ENCODE measurements at regions of chr7 and their contacts with region 1.

Region 1: DNA sequence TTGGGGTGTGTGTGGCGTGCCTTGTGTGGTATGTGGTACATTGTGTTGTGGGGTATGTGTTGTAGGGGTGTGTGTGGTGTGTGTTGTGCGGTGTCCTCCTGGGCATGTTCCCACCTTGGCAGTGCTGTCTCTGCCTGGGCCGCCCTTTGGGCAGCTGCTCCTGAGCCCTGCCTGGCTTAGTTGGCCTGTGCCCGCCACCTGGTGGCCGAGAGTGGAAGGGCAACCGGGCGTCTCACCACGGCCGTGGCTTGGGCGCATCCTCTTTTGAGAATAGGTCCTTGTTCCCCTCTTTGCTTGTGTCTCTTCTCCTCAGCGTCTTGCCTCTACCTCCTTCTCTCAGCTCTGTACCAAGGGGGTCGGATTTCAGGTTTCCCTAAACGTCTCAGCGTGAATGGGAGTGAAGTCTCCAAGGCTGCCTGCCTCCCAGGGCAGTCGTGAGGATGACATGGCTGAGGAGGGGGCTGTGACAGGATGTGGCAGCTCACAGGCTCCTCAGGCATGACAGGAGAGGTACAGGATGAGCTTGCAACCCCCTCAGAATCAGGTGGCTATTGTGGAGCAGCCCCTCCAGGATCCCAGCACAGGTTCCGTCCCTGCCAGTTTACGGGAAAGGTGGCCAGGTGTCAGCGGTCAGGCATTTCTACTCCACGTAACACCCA is 98.4 kb upstream of the PODXL start:
- DNase-seq: peak; percentile 45 to 83 (median 68)
- ATAC-seq: peak; percentile 86
- H3K4me3 ChIP-seq: no peak overlapping the region
- H3K4me3 Mint-ChIP-seq: no peak overlapping the region
- H3K27ac ChIP-seq: no peak overlapping the region
- H3K27ac Mint-ChIP-seq: no peak overlapping the region
- H3K4me1 ChIP-seq: no peaks in the 10 kb centered on the region
- H3K4me1 Mint-ChIP-seq: peaks cover 0 to 5% (median 0%) of the 10 kb centered on the region in 7 donors
- H3K27me3 ChIP-seq: no peaks in the 10 kb centered on the region
- H3K27me3 Mint-ChIP-seq: peaks cover 0 to 13% (median 6%) of the 10 kb centered on the region in 5 donors

Region 2: GRCh38 chr7:131507592-131508331 is 147.0 kb before region 1 on chr7:
- CTCF ChIA-PET with region 1: interaction called, 5 read pairs
- POLR2A ChIA-PET with region 1: no interaction called
- intact Hi-C with region 1: loop called in 1 of 2 experiments (anchors 1 kb)
- DNase-seq: peak; percentile 52 to 79 (median 75)
- ATAC-seq: peak; percentile 91
- H3K4me3 ChIP-seq: no peak overlapping the region
- H3K4me3 Mint-ChIP-seq: peak overlapping the region; percentile 22 to 68 (median 46)
- H3K27ac ChIP-seq: no peak overlapping the region
- H3K27ac Mint-ChIP-seq: peak overlapping the region in 1 of 9 donors; percentile 46
- H3K4me1 ChIP-seq: peaks cover 4 to 8% of the 10 kb centered on the region in 2 donors
- H3K4me1 Mint-ChIP-seq: peaks cover 9 to 35% (median 25%) of the 10 kb centered on the region in 7 donors
- H3K27me3 ChIP-seq: peaks cover 0 to 2% of the 10 kb centered on the region in 2 donors
- H3K27me3 Mint-ChIP-seq: peaks cover 0 to 21% (median 7%) of the 10 kb centered on the region in 5 donors

Region 3: DNA sequence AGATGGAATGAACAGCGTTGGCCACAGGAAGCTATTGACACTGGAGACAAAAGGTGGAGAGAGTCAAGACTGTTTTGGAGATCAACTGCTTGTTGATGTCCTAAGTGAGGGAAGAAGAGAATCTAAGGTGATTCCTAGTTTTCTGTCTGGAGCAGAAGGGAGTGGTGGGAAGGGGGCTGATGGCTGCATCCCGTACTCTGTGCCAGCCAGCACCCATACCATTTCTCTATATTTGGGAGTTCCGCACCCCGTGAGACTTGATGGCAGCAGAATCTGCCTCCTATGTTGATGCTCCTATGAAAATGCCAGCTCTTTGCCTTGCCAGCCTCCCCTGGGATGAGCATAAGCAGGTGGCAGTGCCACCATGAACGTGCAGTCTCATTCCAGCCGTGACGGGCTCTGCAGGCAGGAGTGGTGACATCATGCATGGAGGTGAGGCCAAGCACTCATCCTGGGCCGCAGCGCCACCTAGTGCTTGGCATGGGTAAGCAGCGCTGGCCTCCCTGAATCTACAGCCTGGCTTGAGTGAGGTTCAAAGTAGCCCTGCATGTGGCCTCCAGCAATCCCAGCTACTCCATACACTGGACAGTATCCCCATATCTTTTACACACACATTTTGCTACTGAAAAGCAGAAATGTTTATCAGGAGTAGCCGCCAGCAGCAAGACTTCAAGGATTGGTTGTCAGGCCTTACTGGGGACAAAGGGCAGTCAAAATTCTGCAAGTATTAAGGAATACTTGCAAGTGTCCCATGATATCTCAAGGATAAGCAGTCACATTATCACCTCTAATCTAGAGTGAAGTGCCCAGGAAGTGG is 141.3 kb before region 1 on chr7:
- CTCF ChIA-PET with region 1: interaction called, 3 read pairs
- POLR2A ChIA-PET with region 1: no interaction called
- intact Hi-C with region 1: loop called in 1 of 2 experiments (anchors 1 kb)
- DNase-seq: peak; percentile 39 to 80 (median 65)
- ATAC-seq: peak; percentile 98
- H3K4me3 ChIP-seq: no peak overlapping the region
- H3K4me3 Mint-ChIP-seq: peak overlapping the region in 5 of 10 donors; percentile 33 to 65 (median 47)
- H3K27ac ChIP-seq: no peak overlapping the region
- H3K27ac Mint-ChIP-seq: peak overlapping the region in 3 of 9 donors; percentile 1 to 27 (median 21)
- H3K4me1 ChIP-seq: peaks cover 0 to 4% of the 10 kb centered on the region in 2 donors
- H3K4me1 Mint-ChIP-seq: peaks cover 11 to 22% (median 19%) of the 10 kb centered on the region in 7 donors
- H3K27me3 ChIP-seq: no peaks in the 10 kb centered on the region
- H3K27me3 Mint-ChIP-seq: peaks cover 0 to 13% (median 3%) of the 10 kb centered on the region in 5 donors

Region 4: GRCh38 chr7:131544449-131545301 is 110.1 kb before region 1 on chr7:
- CTCF ChIA-PET with region 1: no interaction called
- POLR2A ChIA-PET with region 1: no interaction called
- intact Hi-C with region 1: loop called in 1 of 2 experiments (anchors 1 kb)
- DNase-seq: no peak
- ATAC-seq: no peak
- H3K4me3 ChIP-seq: no peak overlapping the region
- H3K4me3 Mint-ChIP-seq: no peak overlapping the region
- H3K27ac ChIP-seq: no peak overlapping the region
- H3K27ac Mint-ChIP-seq: peak overlapping the region in 1 of 9 donors; percentile 54
- H3K4me1 ChIP-seq: no peaks in the 10 kb centered on the region
- H3K4me1 Mint-ChIP-seq: peaks cover 0 to 15% (median 0%) of the 10 kb centered on the region in 7 donors
- H3K27me3 ChIP-seq: no peaks in the 10 kb centered on the region
- H3K27me3 Mint-ChIP-seq: peaks cover 4 to 7% (median 5%) of the 10 kb centered on the region in 5 donors

Region 5: GRCh38 chr7:131556052-131556908 is 98.5 kb before region 1 on chr7 and contains the start of gene PODXL:
- CTCF ChIA-PET with region 1: no interaction called
- POLR2A ChIA-PET with region 1: no interaction called
- intact Hi-C with region 1: loop called in 1 of 2 experiments (anchors 1 kb)
- DNase-seq: peak in 8 of 9 donors; percentile 17 to 70 (median 39)
- ATAC-seq: peak; percentile 87
- H3K4me3 ChIP-seq: peak within 1 kb of the TSS; percentile 42
- H3K4me3 Mint-ChIP-seq: peak within 1 kb of the TSS; percentile 73 to 84 (median 80)
- H3K27ac ChIP-seq: no peak within 1 kb of the TSS
- H3K27ac Mint-ChIP-seq: peak within 1 kb of the TSS in 1 of 9 donors; percentile 56
- H3K4me1 ChIP-seq: peaks cover 14 to 16% of the 10 kb centered on the region in 2 donors
- H3K4me1 Mint-ChIP-seq: peaks cover 7 to 22% (median 17%) of the 10 kb centered on the region in 7 donors
- H3K27me3 ChIP-seq: peaks cover 0 to 15% of the 10 kb centered on the region in 2 donors
- H3K27me3 Mint-ChIP-seq: peaks cover 46 to 75% (median 59%) of the 10 kb centered on the region in 5 donors
- total RNA-seq, gene PODXL: 0.05 to 1.4 (median 0.40) TPM

Region 6: GRCh38 chr7:131667699-131668098 is 12.9 kb after region 1 on chr7:
- CTCF ChIA-PET with region 1: no interaction called
- POLR2A ChIA-PET with region 1: no interaction called
- intact Hi-C with region 1: no loop called
- DNase-seq: no peak
- ATAC-seq: no peak
- H3K4me3 ChIP-seq: no peak overlapping the region
- H3K4me3 Mint-ChIP-seq: no peak overlapping the region
- H3K27ac ChIP-seq: no peak overlapping the region
- H3K27ac Mint-ChIP-seq: no peak overlapping the region
- H3K4me1 ChIP-seq: no peaks in the 10 kb centered on the region
- H3K4me1 Mint-ChIP-seq: no peaks in the 10 kb centered on the region
- H3K27me3 ChIP-seq: peaks cover 0 to 3% of the 10 kb centered on the region in 2 donors
- H3K27me3 Mint-ChIP-seq: peaks cover 14 to 43% (median 28%) of the 10 kb centered on the region in 5 donors

Measured in naive thymus-derived CD4-positive, alpha-beta T cell (primary cell).